ENCODE measurements at regions of chr19 and their contacts with region 1.

Region 1: GRCh38 chr19:38559428-38560401 is 58.0 kb downstream of the MAP4K1 start:
- DNase-seq: no peak
- ATAC-seq: no peak
- H3K4me3 ChIP-seq: no peak overlapping the region
- H3K27ac ChIP-seq: no peak overlapping the region
- H3K4me1 ChIP-seq: peaks cover 14 to 17% of the 10 kb centered on the region in 2 experiments; a peak in 4 of 5 replicates
- H3K27me3 ChIP-seq: no peaks in the 10 kb centered on the region
- CTCF ChIP-seq: no peak
- EP300 ChIP-seq: no peak
- POLR2A ChIP-seq: no peak
- RAD21 ChIP-seq: no peak

Region 2: GRCh38 chr19:38596057-38596981 is 36.6 kb after region 1 on chr19:
- CTCF ChIA-PET with region 1: no interaction called
- POLR2A ChIA-PET with region 1: interaction called, 3 read pairs
- in situ Hi-C with region 1: no loop called
- intact Hi-C with region 1: loop called (anchors 2 kb)
- DNase-seq: peak; percentile 95 to 97 (median 97)
- ATAC-seq: peak; percentile 99
- H3K4me3 ChIP-seq: peak overlapping the region; percentile 50
- H3K27ac ChIP-seq: no peak overlapping the region
- H3K4me1 ChIP-seq: peaks cover 10 to 26% of the 10 kb centered on the region in 2 experiments; a peak in 4 of 5 replicates
- H3K27me3 ChIP-seq: no peaks in the 10 kb centered on the region
- CTCF ChIP-seq: peak in 1 of 3 experiments; percentile 6; a peak in 1 of 6 replicates
- EP300 ChIP-seq: no peak
- POLR2A ChIP-seq: no peak
- RAD21 ChIP-seq: no peak

Region 3: GRCh38 chr19:38618590-38619360 is 59.1 kb after region 1 on chr19 and contains the start of gene EIF3K:
- CTCF ChIA-PET with region 1: no interaction called
- POLR2A ChIA-PET with region 1: no interaction called
- in situ Hi-C with region 1: no loop called
- intact Hi-C with region 1: loop called (anchors 5 kb)
- DNase-seq: peak; percentile 98 to 99 (median 98)
- ATAC-seq: peak; percentile 92
- H3K4me3 ChIP-seq: peak within 1 kb of the TSS; percentile 93
- H3K27ac ChIP-seq: peak within 1 kb of the TSS; percentile 94
- H3K4me1 ChIP-seq: peaks cover 13 to 29% of the 10 kb centered on the region in 2 experiments; a peak in 4 of 5 replicates
- H3K27me3 ChIP-seq: no peaks in the 10 kb centered on the region
- CTCF ChIP-seq: no peak
- EP300 ChIP-seq: no peak
- POLR2A ChIP-seq: peak; percentile 98
- RAD21 ChIP-seq: 0 out of 4 replicates have a peak, but pooled peaks of 1 of the 2 experiments have one; percentile 8
- polyA plus RNA-seq, gene EIF3K: 1,193 to 1,486 TPM

Measured in K562 (cell line).